ENCODE measurements at regions of chr5 and their contacts with region 1.

Region 1: DNA sequence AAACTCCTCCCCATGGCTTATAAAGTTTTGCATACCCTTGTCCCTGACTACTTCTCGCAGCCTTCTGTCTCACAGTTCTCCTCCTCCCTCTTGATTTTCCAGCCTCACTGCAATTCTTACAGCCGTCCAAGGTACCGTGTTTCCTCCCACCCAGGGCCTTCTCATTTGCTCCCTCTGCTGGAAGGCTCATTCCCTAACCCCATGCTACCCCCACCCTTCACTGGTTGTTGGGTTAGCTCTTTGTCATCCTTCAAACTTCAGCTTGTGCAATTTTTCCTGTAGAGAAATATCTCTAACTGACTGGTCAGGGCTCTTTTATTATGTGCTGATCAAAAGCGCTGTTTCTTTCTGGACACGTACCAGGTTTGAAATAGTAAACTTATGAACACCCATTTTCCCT is 329.2 kb downstream of the EBF1 start:
- DNase-seq: no peak
- H3K4me3 ChIP-seq: no peak overlapping the region
- H3K27ac ChIP-seq: peak overlapping the region; percentile 55 to 70
- H3K4me1 ChIP-seq: peaks cover 3 to 55% of the 10 kb centered on the region in 2 donors
- H3K27me3 ChIP-seq: no peaks in the 10 kb centered on the region
- CTCF ChIP-seq: peak in 1 of 3 experiments; percentile 23

Region 2: DNA sequence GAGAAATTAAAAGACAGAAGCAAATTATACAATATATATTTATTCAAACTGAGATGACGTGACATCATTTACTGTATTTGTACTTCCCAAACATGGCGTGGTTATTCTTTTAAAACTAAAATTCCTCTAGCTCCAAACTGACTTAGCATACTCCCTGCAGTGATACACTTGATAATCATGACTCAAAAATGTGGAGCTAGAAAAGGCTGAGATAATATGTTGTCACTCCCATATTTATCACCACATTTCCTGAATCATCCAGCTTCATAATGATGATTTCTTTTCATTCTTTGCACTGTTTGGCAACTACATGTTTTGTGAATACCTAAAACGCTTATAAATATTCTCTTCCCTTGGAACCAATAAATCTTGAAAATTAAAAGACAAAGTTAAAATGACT is 11.8 kb before region 1 on chr5:
- intact Hi-C with region 1: loop called (anchors 2 kb)
- DNase-seq: no peak
- H3K4me3 ChIP-seq: no peak overlapping the region
- H3K27ac ChIP-seq: no peak overlapping the region
- H3K4me1 ChIP-seq: peaks cover 2 to 29% of the 10 kb centered on the region in 2 donors
- H3K27me3 ChIP-seq: no peaks in the 10 kb centered on the region
- CTCF ChIP-seq: no peak